Posterior cingulate gyrus (tissue), 11 donors: ENCODE measurements at regions of chr17 and their contacts with region 1.

Region 1: DNA sequence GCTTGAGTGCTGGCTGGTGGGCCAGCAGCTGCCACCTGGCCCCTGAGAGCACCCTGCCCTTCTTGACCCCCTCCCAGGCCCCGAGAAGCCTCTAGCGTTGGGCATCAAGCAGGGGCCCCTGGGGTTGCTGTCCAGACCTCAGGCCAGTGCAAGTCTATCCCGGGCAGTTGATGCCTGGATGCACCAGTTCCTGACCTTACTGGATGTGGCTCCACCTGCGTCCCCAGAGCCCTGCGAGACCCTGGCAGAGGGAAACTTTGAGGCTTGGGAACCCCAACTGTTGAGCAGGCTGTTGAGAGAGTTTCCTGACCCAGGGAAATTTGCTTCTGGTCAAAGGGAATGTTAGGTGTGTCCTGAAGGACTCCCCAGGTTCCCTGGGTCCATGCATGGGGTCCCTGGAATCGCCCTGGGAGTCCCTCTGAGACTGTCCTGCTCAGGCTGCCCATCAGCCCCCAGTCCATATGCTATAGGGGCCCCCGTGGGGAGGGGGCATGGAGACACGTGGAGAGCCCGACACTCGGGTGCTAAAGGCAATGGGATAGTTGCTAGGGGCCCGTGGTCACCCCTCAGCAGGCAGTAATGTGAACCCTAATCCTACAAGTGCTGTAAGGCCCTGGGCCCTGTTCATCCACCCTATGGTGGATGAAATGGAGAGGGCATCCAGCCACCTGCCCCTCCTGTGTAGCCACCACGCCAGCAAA is 46.4 kb downstream of the RAB11FIP4 start:
- DNase-seq: peak in 2 of 10 donors; percentile 50 to 62

Region 2: DNA sequence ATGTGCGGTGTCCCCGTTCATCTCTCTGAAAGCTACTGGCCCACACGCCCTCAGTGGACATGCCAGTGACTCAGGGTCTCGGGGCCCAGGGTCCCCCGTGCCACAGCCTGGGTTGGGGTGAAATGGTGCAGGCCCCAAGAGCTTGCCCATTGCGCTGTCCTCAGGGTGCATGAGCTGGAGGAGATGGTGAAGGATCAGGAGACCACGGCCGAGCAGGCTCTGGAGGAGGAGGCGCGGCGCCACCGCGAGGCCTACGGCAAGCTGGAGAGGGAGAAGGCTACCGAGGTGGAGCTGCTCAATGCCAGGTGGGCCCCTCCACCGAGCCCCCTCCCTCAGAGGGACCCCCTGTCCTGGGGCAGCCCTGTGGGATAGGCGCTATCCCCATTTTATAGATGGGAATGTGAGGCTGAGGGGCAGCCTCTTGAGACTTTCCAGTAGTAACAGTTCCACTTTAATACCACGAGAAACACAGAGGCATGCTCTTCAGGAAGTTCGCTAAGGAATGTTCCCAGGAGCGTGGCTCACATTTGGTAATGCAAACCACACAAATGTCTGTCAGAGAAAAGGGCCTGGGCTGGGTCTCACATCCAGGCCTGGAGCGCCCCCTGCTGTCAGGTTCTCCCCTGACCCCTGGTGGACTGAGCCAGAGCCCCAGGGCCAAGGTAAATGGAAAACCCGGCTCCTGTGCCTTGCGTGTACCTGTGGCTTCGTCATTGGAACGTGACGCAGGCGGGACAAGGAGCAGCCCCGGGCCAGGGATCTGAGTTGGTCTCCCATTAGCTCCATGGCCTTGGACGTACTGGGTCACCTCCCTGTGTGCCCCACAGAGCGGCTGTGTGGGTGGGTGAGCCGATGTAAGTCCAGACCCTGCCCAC is 87.3 kb after region 1 on chr17:
- intact Hi-C with region 1: loop called (anchors 1 kb)
- DNase-seq: peak; percentile 70 to 97 (median 92)

Region 3: DNA sequence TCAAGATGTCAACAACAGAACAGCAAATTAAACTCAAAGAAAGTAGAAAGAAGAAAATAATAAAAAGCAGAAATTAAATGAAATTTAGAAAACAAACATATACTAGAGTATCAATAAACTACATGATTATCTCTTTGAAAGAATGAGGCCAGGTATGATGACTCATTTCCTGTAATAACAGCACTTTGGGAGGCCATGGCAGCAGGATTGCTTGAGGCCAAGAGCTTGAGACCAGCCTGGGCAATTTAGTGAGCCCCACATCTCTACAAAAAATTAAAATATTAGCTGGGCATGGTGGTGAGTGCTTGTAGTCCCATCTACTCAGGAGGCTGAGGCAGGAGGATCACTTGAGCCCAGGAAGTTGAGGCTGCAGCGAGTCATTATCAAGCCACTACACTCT is 186.1 kb after region 1 on chr17:
- intact Hi-C with region 1: no loop called
- DNase-seq: no peak

Region 4: GRCh38 chr17:31842183-31843069 is 404.6 kb after region 1 on chr17:
- intact Hi-C with region 1: loop called (anchors 5 kb)
- DNase-seq: peak; percentile 45 to 95 (median 76)

Region 5: GRCh38 chr17:32536736-32537643 is 1099.1 kb after region 1 on chr17:
- intact Hi-C with region 1: no loop called
- DNase-seq: no peak